ENCODE measurements at regions of chr3 and their contacts with region 1.

Region 1: DNA sequence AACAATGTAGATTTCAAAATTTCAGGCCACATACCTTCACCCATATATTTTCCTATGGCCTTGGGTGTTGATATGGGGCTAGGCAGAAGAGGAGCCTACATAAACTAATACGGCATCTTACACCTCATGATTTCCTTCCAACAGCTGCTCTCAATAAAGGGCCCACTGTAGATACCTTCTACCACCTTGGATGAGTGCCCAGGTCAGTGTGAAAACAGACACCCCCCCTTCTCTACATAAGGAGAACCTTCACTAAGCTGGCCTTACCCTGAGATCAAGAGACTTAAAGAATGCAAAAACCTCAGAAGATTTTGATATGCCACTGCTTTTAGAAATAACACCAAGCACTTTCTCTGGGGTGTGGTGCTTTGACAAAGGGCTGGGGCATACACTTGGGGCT is 42.7 kb downstream of the SH3BP5 start:
- DNase-seq: no peak
- ATAC-seq: no peak
- H3K4me3 ChIP-seq: no peak overlapping the region
- H3K4me3 Mint-ChIP-seq: peak overlapping the region in 1 of 3 donors; percentile 77
- H3K27ac ChIP-seq: peak overlapping the region; percentile 58
- H3K27ac Mint-ChIP-seq: peak overlapping the region; percentile 90 to 96
- H3K4me1 ChIP-seq: peaks cover 26 to 85% of the 10 kb centered on the region in 2 experiments
- H3K4me1 Mint-ChIP-seq: peaks cover 82 to 94% (median 83%) of the 10 kb centered on the region in 3 donors
- H3K27me3 ChIP-seq: no peaks in the 10 kb centered on the region
- H3K27me3 Mint-ChIP-seq: no peaks in the 10 kb centered on the region

Region 2: GRCh38 chr3:15148614-15149013 is 141.0 kb before region 1 on chr3:
- CTCF ChIA-PET with region 1: no interaction called
- POLR2A ChIA-PET with region 1: no interaction called
- DNase-seq: no peak
- ATAC-seq: no peak
- H3K4me3 ChIP-seq: no peak overlapping the region
- H3K4me3 Mint-ChIP-seq: no peak overlapping the region
- H3K27ac ChIP-seq: no peak overlapping the region
- H3K27ac Mint-ChIP-seq: no peak overlapping the region
- H3K4me1 ChIP-seq: no peaks in the 10 kb centered on the region
- H3K4me1 Mint-ChIP-seq: no peaks in the 10 kb centered on the region
- H3K27me3 ChIP-seq: peaks cover 0 to 7% of the 10 kb centered on the region in 2 experiments
- H3K27me3 Mint-ChIP-seq: peaks cover 19 to 31% of the 10 kb centered on the region in 2 donors

Region 3: DNA sequence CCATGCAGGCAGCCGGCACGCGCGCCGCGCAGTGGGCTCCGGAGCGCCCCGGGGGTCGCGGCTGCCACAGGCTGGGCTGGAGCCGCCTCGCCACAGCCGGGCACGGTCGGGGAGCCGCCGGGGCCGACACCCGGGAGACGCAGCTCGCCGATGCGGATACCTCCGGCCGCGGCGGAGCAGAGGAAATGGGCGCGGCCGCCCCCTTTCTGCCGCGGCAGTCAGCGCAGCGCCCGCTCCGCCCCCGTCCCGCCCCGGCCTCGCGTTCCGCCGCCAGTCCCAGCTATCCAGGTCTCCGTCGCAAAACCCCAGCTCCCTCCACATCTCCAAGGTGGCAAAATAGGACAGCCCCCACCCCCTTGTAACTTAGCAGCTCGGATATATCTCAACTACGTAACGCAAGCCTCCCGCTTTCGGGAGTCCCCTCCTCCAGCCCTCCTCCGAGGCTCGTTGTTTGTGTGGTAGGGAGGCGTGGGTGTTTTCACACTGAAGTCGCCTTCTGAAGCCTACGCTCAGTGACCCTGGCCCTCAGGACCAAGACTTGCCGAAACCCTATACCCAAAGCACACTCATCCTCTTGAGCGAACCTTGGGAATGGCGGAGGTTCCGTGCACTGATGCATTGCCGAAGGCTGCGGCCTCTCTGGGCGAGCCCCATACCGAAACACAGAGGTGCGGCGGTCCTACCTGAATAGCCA is 42.9 kb after region 1 on chr3 and contains the start of gene SH3BP5:
- CTCF ChIA-PET with region 1: interaction called, 3 to 14 read pairs
- POLR2A ChIA-PET with region 1: interaction called, 4 to 5 read pairs
- DNase-seq: peak; percentile 30 to 86 (median 64)
- ATAC-seq: peak; percentile 93 to 95 (median 94)
- H3K4me3 ChIP-seq: peak within 1 kb of the TSS; percentile 77 to 95
- H3K4me3 Mint-ChIP-seq: peak within 1 kb of the TSS; percentile 88 to 96 (median 96)
- H3K27ac ChIP-seq: peak within 1 kb of the TSS; percentile 55
- H3K27ac Mint-ChIP-seq: peak within 1 kb of the TSS; percentile 92 to 94
- H3K4me1 ChIP-seq: peaks cover 12 to 40% of the 10 kb centered on the region in 2 experiments
- H3K4me1 Mint-ChIP-seq: peaks cover 55 to 59% (median 56%) of the 10 kb centered on the region in 3 donors
- H3K27me3 ChIP-seq: no peaks in the 10 kb centered on the region
- H3K27me3 Mint-ChIP-seq: no peaks in the 10 kb centered on the region
- total RNA-seq, gene SH3BP5: 25.0 to 66.7 (median 41.7) TPM

Measured in T-cell (primary cell).